Calu3 (cell line): ENCODE measurements at regions of chr10 and their contacts with region 1.

Region 1: DNA sequence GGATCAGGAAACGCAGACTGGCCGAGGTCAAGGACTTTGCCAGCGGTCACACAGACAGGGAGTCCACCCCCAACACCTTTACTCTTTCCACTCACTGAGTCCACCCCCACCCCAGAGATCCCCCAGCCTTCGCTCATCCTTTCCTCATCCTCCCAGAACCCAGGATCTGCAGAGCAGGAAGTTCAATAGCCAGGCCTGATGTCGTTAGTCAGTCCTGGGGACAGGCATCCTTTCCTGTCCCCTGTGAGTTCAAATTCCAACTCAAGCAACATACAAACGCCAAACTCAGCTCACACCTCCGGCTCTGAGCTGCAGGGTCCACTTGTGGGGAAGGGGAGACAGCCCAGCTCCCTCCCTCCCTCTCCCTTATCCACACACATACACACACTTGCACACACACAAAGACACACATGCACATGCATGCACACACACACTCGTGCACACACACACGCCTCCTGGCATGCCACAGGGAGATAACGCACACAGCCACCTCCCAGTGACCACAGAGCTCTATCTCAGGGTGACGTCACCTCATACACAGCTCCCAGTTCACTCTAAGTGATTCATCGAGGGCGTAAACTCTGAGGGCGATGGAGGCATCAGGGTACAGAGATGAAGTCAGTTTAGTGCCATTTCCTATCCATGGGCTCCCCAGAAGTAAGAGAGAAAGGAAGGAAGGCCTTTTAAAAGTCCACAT is 23.9 kb downstream of the CALML3 start:
- DNase-seq: peak; percentile 83
- H3K4me3 Mint-ChIP-seq: no peak overlapping the region
- H3K27ac Mint-ChIP-seq: no peak overlapping the region
- H3K4me1 Mint-ChIP-seq: no peaks in the 10 kb centered on the region
- H3K27me3 Mint-ChIP-seq: no peaks in the 10 kb centered on the region
- CTCF ChIP-seq: no peak

Region 2: GRCh38 chr10:4813023-4813422 is 735.7 kb before region 1 on chr10:
- CTCF ChIA-PET with region 1: no interaction called
- intact Hi-C with region 1: loop called (anchors 10 kb)
- DNase-seq: peak; percentile 21
- H3K4me3 Mint-ChIP-seq: no peak overlapping the region
- H3K27ac Mint-ChIP-seq: no peak overlapping the region
- H3K4me1 Mint-ChIP-seq: peaks cover 34% of the 10 kb centered on the region
- H3K27me3 Mint-ChIP-seq: no peaks in the 10 kb centered on the region
- CTCF ChIP-seq: no peak

Region 3: GRCh38 chr10:5446390-5446926 is 102.2 kb before region 1 on chr10:
- CTCF ChIA-PET with region 1: interaction called, 8 read pairs
- intact Hi-C with region 1: loop called (anchors 1 kb)
- DNase-seq: peak; percentile 97
- H3K4me3 Mint-ChIP-seq: peak overlapping the region; percentile 94
- H3K27ac Mint-ChIP-seq: peak overlapping the region; percentile 94
- H3K4me1 Mint-ChIP-seq: peaks cover 20% of the 10 kb centered on the region
- H3K27me3 Mint-ChIP-seq: no peaks in the 10 kb centered on the region
- CTCF ChIP-seq: no peak

Region 4: GRCh38 chr10:5502903-5503835 is 45.5 kb before region 1 on chr10:
- CTCF ChIA-PET with region 1: no interaction called
- intact Hi-C with region 1: loop called (anchors 2 kb)
- DNase-seq: peak; percentile 77
- H3K4me3 Mint-ChIP-seq: peak overlapping the region; percentile 12
- H3K27ac Mint-ChIP-seq: peak overlapping the region; percentile 62
- H3K4me1 Mint-ChIP-seq: peaks cover 42% of the 10 kb centered on the region
- H3K27me3 Mint-ChIP-seq: no peaks in the 10 kb centered on the region
- CTCF ChIP-seq: no peak

Region 5: GRCh38 chr10:5583525-5584175 is 35.0 kb after region 1 on chr10:
- CTCF ChIA-PET with region 1: interaction called, 13 read pairs
- intact Hi-C with region 1: loop called (anchors 2 kb)
- DNase-seq: no peak
- H3K4me3 Mint-ChIP-seq: no peak overlapping the region
- H3K27ac Mint-ChIP-seq: peak overlapping the region; percentile 19
- H3K4me1 Mint-ChIP-seq: peaks cover 38% of the 10 kb centered on the region
- H3K27me3 Mint-ChIP-seq: no peaks in the 10 kb centered on the region
- CTCF ChIP-seq: no peak

Region 6: GRCh38 chr10:5609952-5610616 is 61.4 kb after region 1 on chr10:
- CTCF ChIA-PET with region 1: interaction called, 9 read pairs
- intact Hi-C with region 1: loop called (anchors 1 kb)
- DNase-seq: peak; percentile 79
- H3K4me3 Mint-ChIP-seq: peak overlapping the region; percentile 44
- H3K27ac Mint-ChIP-seq: peak overlapping the region; percentile 71
- H3K4me1 Mint-ChIP-seq: peaks cover 35% of the 10 kb centered on the region
- H3K27me3 Mint-ChIP-seq: no peaks in the 10 kb centered on the region
- CTCF ChIP-seq: no peak

Region 7: GRCh38 chr10:5623081-5623748 is 74.5 kb after region 1 on chr10:
- CTCF ChIA-PET with region 1: interaction called, 14 read pairs
- intact Hi-C with region 1: loop called (anchors 2 kb)
- DNase-seq: peak; percentile 96
- H3K4me3 Mint-ChIP-seq: no peak overlapping the region
- H3K27ac Mint-ChIP-seq: no peak overlapping the region
- H3K4me1 Mint-ChIP-seq: peaks cover 8% of the 10 kb centered on the region
- H3K27me3 Mint-ChIP-seq: no peaks in the 10 kb centered on the region
- CTCF ChIP-seq: peak; percentile 93